Heart right ventricle (tissue), 16 donors: ENCODE measurements at regions of chr15 and their contacts with region 1.

Region 1: GRCh38 chr15:25967126-25967525 is 104.0 kb upstream of the ATP10A start:
- DNase-seq: no peak
- ATAC-seq: no peak
- H3K4me3 ChIP-seq: no peak overlapping the region
- H3K27ac ChIP-seq: no peak overlapping the region
- H3K4me1 ChIP-seq: no peaks in the 10 kb centered on the region
- H3K27me3 ChIP-seq: no peaks in the 10 kb centered on the region
- CTCF ChIP-seq: no peak

Region 2: DNA sequence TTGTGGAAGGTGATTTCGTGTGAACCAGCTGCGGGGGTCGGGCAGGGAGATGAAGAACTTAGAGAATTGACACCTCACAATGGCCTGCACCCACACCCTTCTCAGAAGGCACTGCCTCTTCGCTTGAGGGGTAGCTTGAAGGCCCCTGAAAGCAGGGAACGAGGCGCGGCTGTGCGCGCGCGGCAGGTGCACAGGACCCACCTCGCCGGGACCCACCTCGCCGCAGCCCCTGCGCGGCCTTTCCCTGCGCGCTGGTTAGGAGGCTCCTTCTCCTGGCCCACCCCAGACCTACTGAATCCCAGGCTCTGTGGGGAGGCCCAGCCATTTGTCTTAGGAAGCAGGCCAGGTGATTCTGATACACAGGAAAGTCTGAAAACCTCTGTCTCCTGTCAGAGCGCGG is 57.8 kb before region 1 on chr15:
- intact Hi-C with region 1: no loop called
- DNase-seq: no peak
- ATAC-seq: no peak
- H3K4me3 ChIP-seq: no peak overlapping the region
- H3K27ac ChIP-seq: no peak overlapping the region
- H3K4me1 ChIP-seq: no peaks in the 10 kb centered on the region
- H3K27me3 ChIP-seq: no peaks in the 10 kb centered on the region
- CTCF ChIP-seq: no peak

Region 3: GRCh38 chr15:26028086-26028740 is 61.1 kb after region 1 on chr15:
- intact Hi-C with region 1: loop called in 1 of 10 experiments (anchors 10 kb)
- DNase-seq: no peak
- ATAC-seq: no peak
- H3K4me3 ChIP-seq: no peak overlapping the region
- H3K27ac ChIP-seq: no peak overlapping the region
- H3K4me1 ChIP-seq: no peaks in the 10 kb centered on the region
- H3K27me3 ChIP-seq: peaks cover 0 to 24% (median 14%) of the 10 kb centered on the region in 7 donors
- CTCF ChIP-seq: no peak